Stomach (tissue), 19 donors: ENCODE measurements at regions of chr15 and their contacts with region 1.

Region 1: DNA sequence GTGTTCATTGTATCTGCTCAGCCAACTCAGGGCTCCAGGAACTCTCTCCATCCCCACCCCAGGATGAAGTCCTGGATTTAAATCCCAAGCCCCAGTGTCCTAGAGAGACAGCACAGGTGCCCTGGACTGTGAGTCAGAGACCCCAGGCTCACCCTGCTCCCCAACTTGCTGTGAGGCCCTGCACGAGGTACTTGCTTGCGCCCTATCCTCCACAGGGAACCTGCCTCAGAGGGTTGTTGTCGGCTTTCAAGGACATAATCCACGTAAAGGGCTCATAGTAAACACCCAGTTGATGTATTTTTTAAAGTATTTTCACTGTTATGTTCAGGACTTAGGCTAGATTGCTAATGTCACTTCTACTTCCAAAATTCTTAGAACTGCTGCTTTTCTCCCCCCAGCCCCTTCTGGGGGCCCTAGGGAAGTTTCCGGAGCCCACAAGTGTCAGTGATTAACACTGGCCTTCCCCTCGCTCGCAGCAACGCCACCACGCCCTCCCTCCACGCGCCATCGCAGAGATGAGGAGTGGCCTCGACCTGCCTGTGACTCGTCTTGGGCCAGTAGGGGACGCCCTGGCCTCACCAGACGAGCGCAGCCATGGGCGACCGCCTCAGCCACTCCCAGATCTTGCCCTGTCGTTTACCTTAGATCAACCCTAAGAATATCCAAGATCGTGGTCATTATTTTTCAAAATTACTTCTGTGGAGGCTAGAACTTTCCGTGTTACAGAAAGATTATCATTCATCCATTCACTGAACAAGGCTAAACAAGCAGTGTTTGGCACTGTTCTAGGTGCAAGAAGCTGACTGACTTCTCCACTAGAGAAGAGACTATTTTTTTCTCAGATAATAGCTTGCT is 6.0 kb upstream of the SRP14 start:
- DNase-seq: peak; percentile 91 to 96
- H3K4me3 ChIP-seq: peak overlapping the region in 1 of 4 donors; percentile 6
- H3K27ac ChIP-seq: peak overlapping the region in 3 of 5 donors; percentile 40 to 76 (median 65)
- H3K4me1 ChIP-seq: peaks cover 15 to 58% (median 42%) of the 10 kb centered on the region in 4 donors
- H3K27me3 ChIP-seq: no peaks in the 10 kb centered on the region
- CTCF ChIP-seq: peak in 5 of 7 experiments; percentile 75 to 93 (median 89)
- EP300 ChIP-seq: no peak
- POLR2A ChIP-seq: no peak

Region 2: DNA sequence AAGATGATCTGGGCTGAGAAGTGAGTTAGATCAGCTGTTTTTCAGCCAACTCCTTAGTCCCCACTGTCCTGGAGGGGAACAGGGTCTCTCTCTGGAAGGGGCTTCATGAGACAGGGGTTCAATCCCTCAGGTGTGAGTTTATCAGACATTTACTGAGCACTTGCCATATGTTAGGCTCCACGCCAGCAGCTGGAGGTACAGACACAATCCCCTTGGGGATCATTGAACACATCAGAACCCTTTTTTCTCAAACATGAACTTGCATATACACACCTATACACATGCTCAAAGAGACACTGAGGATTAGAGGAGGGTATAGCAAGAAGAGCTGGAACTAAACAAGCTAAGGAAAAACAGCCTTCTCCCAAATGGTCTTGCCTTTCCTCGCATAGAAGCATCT is 69.3 kb after region 1 on chr15:
- intact Hi-C with region 1: loop called (anchors 5 kb)
- DNase-seq: no peak
- H3K4me3 ChIP-seq: no peak overlapping the region
- H3K27ac ChIP-seq: no peak overlapping the region
- H3K4me1 ChIP-seq: peaks cover 0 to 7% (median 4%) of the 10 kb centered on the region in 4 donors
- H3K27me3 ChIP-seq: no peaks in the 10 kb centered on the region
- CTCF ChIP-seq: no peak
- EP300 ChIP-seq: no peak
- POLR2A ChIP-seq: no peak